Aorta (tissue), 5 donors: ENCODE measurements at regions of chr2 and their contacts with region 1.

Region 1: DNA sequence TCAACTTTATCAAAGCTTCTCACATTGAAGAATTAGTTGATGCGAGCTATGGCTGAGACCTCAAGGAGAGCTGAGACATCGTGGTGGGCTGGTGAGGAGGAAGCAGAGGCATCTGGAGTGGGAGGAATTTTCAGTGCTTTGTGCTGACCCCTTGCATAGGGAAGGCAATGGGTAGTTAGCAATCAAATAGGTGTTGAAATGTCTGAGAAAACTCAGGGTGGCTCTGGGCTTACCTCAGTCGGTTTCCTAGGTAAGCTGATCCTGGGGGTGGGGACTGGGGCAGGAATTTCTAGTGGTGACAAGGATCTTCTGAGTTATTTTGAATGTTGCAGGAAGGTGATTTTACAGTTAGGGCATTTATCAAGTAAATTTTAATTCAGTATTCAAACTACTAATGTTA is 20.7 kb upstream of the DPP10 start:
- DNase-seq: no peak
- ATAC-seq: no peak
- H3K4me3 ChIP-seq: no peak overlapping the region
- H3K27ac ChIP-seq: no peak overlapping the region
- H3K4me1 ChIP-seq: peaks cover 0 to 8% of the 10 kb centered on the region in 2 donors
- H3K27me3 ChIP-seq: no peaks in the 10 kb centered on the region

Region 2: DNA sequence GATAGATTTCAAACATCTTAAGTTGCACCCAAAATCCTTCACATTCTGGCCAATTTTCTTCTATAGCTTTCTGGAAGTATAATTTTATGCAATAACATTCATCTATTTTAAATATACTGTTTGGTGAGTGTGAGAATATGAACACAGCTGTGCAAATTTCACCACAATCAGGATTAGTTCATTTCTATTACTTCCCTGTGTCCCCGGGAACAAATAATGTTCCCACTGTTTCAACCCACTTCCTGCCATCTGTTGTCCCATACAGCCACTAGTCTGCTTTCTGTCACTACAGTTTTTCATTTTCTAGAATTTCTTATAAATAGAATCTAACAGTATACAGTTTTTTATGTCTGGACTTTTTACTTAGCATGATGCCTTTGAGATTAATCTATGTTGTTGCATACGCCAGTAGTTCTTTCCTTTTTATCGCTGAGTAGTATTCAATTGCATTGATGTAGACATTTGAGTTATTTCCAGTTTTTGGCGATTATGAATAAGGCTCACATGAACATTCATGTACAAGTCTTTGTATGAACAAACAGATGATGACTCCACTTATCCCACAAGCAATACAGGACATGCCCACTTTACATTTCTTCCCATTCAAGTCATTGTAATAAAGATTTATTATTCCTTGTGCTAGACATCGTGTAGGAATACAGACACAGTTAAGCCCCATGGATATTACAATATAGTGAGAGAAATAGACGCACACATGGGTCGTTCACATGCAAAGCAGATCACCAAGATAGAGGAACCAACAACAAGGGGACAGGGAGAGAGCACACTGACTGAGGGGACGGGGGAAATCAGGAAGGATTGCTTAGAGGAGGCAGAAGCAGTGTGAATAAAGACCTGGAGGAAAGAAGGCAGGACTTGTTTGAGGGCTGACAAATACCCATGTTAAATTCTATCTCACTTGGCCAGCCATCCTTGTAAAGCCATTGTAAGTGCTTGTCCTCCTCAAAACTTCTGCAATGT is 1070.1 kb before region 1 on chr2:
- intact Hi-C with region 1: no loop called
- DNase-seq: no peak
- ATAC-seq: no peak
- H3K4me3 ChIP-seq: no peak overlapping the region
- H3K27ac ChIP-seq: no peak overlapping the region
- H3K4me1 ChIP-seq: no peaks in the 10 kb centered on the region
- H3K27me3 ChIP-seq: no peaks in the 10 kb centered on the region

Region 3: GRCh38 chr2:114237331-114237730 is 184.4 kb before region 1 on chr2:
- intact Hi-C with region 1: no loop called
- DNase-seq: no peak
- ATAC-seq: no peak
- H3K4me3 ChIP-seq: no peak overlapping the region
- H3K27ac ChIP-seq: no peak overlapping the region
- H3K4me1 ChIP-seq: no peaks in the 10 kb centered on the region
- H3K27me3 ChIP-seq: no peaks in the 10 kb centered on the region

Region 4: DNA sequence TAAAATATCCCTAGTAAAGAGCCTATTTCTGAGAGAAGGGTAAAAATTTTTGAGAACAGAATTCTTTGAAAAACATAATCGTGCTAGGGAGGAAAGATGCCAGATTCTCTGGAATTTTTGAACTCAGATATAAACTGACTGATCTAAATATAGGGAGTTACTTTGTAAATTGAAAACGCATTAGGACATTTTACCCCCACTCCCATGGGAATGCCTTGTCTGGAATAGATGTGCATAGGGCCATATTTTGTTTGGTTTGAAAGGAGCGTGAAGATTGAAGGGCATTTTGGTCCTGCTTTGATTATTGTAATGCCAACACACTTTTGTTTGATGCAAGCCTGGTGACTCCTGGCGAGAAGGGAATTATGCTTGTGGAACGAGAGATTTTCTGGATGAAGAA is 138.0 kb before region 1 on chr2:
- intact Hi-C with region 1: loop called in 1 of 2 experiments (anchors 5 kb)
- DNase-seq: no peak
- ATAC-seq: peak; percentile 56
- H3K4me3 ChIP-seq: no peak overlapping the region
- H3K27ac ChIP-seq: peak overlapping the region; percentile 21 to 57
- H3K4me1 ChIP-seq: peaks cover 2 to 7% of the 10 kb centered on the region in 2 donors
- H3K27me3 ChIP-seq: no peaks in the 10 kb centered on the region

Region 5: GRCh38 chr2:114373591-114373990 is 48.2 kb before region 1 on chr2:
- intact Hi-C with region 1: loop called in 1 of 2 experiments (anchors 5 kb)
- DNase-seq: no peak
- ATAC-seq: no peak
- H3K4me3 ChIP-seq: no peak overlapping the region
- H3K27ac ChIP-seq: no peak overlapping the region
- H3K4me1 ChIP-seq: no peaks in the 10 kb centered on the region
- H3K27me3 ChIP-seq: no peaks in the 10 kb centered on the region

Region 6: GRCh38 chr2:114400890-114401289 is 20.9 kb before region 1 on chr2:
- intact Hi-C with region 1: no loop called
- DNase-seq: no peak
- ATAC-seq: no peak
- H3K4me3 ChIP-seq: no peak overlapping the region
- H3K27ac ChIP-seq: no peak overlapping the region
- H3K4me1 ChIP-seq: peaks cover 0 to 3% of the 10 kb centered on the region in 2 donors
- H3K27me3 ChIP-seq: no peaks in the 10 kb centered on the region

Region 7: GRCh38 chr2:114543236-114543766 is 121.5 kb after region 1 on chr2:
- intact Hi-C with region 1: loop called (anchors 2 to 10 kb)
- DNase-seq: peak in 1 of 2 donors; percentile 61
- ATAC-seq: peak; percentile 87
- H3K4me3 ChIP-seq: peak overlapping the region in 1 of 2 donors; percentile 11
- H3K27ac ChIP-seq: peak overlapping the region; percentile 67 to 77
- H3K4me1 ChIP-seq: no peaks in the 10 kb centered on the region
- H3K27me3 ChIP-seq: no peaks in the 10 kb centered on the region